Head of caudate nucleus (tissue), 42 donors: ENCODE measurements at regions of chr6 and their contacts with region 1.

Region 1: GRCh38 chr6:29589423-29590048 is 4.6 kb downstream of the OR2H2 start:
- DNase-seq: peak in 33 of 42 donors; percentile 30 to 83 (median 57)

Region 2: DNA sequence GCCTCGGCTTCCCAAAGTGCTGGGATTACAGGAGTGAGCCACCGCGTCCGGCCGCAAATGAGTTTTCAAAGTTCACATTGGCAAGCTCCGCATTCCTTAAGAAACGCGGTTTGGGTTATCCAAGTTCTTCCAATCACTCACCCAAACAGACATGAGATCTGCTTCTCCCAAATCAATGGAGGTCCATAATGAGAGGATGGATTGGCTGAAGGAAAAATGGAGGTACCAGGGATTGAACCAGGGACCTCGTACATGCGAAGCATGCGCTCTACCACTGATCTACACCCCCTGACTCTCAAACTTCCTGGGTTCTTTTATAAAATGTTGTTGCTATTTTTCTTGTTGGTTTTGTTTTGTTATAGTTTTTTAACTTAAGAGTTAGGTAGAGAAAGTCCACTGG is 893.8 kb before region 1 on chr6:
- intact Hi-C with region 1: loop called (anchors 10 kb)
- DNase-seq: no peak

Region 3: DNA sequence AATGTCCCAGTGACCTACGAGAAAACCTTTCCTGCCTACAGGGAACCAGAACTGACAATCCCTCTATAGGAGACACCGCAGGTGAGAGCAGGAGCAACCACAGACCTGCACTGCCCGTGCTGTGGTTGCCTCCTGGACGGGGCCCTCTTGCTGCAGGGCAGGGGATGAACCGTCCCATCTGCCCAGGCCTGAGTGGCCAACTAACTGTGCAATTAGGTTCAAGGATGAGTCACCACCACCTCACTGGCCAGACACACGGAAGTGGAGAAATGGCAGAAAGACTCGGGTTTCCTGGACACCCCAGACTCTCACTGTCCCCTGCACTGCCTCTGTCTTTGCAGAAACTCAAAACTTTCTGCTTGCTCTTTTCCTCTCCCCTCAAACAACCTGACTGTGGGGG is 224.3 kb after region 1 on chr6:
- intact Hi-C with region 1: no loop called
- DNase-seq: no peak